HCT116 (cell line): ENCODE measurements at regions of chr5 and their contacts with region 1.

Region 1: GRCh38 chr5:44774279-44774880 is 34.4 kb upstream of the MRPS30 start:
- DNase-seq: peak; percentile 38
- ATAC-seq: no peak; the same call in 1 of the 2 replicates
- H3K4me3 ChIP-seq: no peak overlapping the region
- H3K27ac ChIP-seq: no peak overlapping the region
- H3K4me1 ChIP-seq: no peaks in the 10 kb centered on the region
- H3K27me3 ChIP-seq: no peaks in the 10 kb centered on the region
- CTCF ChIP-seq: peak; percentile 35 to 66 (median 59)
- POLR2A ChIP-seq: no peak
- RAD21 ChIP-seq: peak; percentile 81

Region 2: DNA sequence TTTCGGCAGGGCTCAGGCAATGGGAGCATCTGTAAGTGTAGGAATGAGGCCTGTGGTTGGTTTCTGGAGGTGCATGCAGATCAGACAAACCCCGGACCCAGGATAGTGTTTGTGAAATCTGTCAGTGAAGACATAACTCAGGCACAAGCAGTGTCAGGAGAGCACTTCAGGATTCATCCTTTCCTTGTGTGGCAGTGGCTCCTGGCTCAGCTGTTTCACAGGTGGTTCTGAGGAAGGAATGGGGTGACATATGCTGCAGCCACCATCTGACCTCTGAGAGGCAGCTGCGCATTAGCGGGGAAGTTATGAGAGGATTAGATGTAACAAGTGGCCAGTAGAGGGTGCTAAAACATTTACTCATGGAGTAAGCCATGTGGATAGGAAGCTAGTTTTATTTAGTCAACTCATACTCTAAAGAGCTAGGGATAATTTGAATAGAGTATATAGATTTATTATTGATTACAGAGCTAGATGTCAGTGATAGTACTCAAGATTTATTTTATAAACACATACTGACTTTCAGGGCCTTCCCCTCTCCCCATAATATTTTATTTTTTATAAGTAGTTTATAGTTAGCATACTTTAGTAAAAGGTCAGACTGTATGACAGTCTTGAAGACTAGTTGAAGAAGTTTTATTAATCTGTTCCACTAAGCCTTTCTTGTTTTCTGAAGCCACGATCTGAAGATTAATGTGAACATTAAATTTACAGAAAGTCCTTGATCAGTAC is 1143.0 kb before region 1 on chr5:
- CTCF ChIA-PET with region 1: interaction called, 18 read pairs
- POLR2A ChIA-PET with region 1: no interaction called
- RAD21 ChIA-PET with region 1: interaction called in 1 of 2 experiments, 4 read pairs
- intact Hi-C with region 1: loop called (anchors 5 kb)
- DNase-seq: peak; percentile 69
- ATAC-seq: peak; percentile 94
- H3K4me3 ChIP-seq: no peak overlapping the region
- H3K27ac ChIP-seq: no peak overlapping the region
- H3K4me1 ChIP-seq: peaks cover 0 to 2% of the 10 kb centered on the region in 2 experiments; a peak in 1 of 4 replicates
- H3K27me3 ChIP-seq: no peaks in the 10 kb centered on the region
- CTCF ChIP-seq: peak; percentile 56 to 83 (median 64); a peak in 5 of 6 replicates
- POLR2A ChIP-seq: no peak
- RAD21 ChIP-seq: peak; percentile 72

Region 3: DNA sequence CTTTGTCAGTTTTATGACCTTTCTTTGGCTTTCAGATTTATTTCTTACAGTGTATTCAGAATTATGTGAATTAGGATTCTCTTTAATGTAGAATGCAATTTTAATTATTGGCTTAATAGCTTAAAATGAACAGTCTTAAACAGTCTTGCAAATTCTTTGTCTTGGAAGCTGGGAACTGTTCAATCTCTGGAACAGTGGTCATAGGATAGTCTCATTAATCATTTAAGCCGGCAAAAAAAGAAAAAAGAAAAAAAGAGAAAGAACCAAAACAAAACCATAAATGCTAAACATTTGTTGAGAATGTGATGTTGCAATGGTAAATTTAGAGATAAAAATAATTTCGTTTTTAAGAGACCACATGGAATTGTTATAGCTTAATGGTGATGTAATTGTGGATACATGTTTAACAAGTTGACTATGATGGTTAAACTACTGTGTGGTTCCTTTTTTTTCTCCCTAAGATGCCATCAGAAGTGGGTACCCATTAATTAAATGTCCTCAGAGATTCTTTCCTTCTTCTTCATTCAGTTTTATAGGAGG is 1109.8 kb before region 1 on chr5:
- CTCF ChIA-PET with region 1: no interaction called
- POLR2A ChIA-PET with region 1: no interaction called
- RAD21 ChIA-PET with region 1: no interaction called
- intact Hi-C with region 1: loop called (anchors 2 kb)
- DNase-seq: no peak
- ATAC-seq: no peak
- H3K4me3 ChIP-seq: no peak overlapping the region
- H3K27ac ChIP-seq: no peak overlapping the region
- H3K4me1 ChIP-seq: no peaks in the 10 kb centered on the region
- H3K27me3 ChIP-seq: no peaks in the 10 kb centered on the region
- CTCF ChIP-seq: no peak
- POLR2A ChIP-seq: no peak
- RAD21 ChIP-seq: no peak

Region 4: DNA sequence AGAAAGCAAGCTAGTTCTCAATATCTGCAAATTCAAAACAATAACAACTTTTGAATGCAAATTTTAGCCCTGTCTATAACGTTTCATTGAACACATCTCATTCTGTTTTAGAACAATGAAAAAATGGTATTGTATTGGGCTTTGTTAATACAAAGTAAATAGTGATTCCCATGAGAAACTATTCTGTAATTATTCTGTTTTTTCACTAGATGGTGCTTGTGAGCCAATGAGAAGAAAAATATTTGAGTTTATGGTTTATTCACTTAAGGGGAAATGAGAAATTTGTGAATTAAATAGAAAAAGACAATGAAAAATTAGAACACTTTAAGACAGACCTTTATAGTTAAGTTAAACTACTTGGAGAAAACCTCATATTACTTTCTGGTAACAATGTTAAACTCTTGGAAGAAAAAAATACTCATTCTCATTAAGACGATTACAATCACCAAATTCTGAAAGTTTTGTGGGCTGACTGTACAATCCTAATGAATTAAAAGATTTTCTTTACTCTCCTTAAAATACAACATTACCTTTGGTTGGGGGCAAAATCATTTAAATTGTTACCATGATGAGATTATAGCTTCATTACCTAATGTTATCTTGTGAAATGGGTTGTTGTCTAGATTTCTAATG is 1044.4 kb before region 1 on chr5:
- CTCF ChIA-PET with region 1: interaction called, 4 read pairs
- POLR2A ChIA-PET with region 1: no interaction called
- RAD21 ChIA-PET with region 1: no interaction called
- intact Hi-C with region 1: loop called (anchors 1 kb)
- DNase-seq: peak; percentile 7
- ATAC-seq: 0 out of 2 replicates have a peak, but pooled peaks have one; percentile 40
- H3K4me3 ChIP-seq: no peak overlapping the region
- H3K27ac ChIP-seq: no peak overlapping the region
- H3K4me1 ChIP-seq: no peaks in the 10 kb centered on the region
- H3K27me3 ChIP-seq: no peaks in the 10 kb centered on the region; the same call in 1 of the 2 replicates
- CTCF ChIP-seq: peak in 2 of 3 experiments; percentile 29 to 66; a peak in 3 of 6 replicates
- POLR2A ChIP-seq: no peak
- RAD21 ChIP-seq: peak; percentile 62

Region 5: GRCh38 chr5:44332285-44332971 is 442.0 kb before region 1 on chr5:
- CTCF ChIA-PET with region 1: interaction called, 10 read pairs
- POLR2A ChIA-PET with region 1: no interaction called
- RAD21 ChIA-PET with region 1: no interaction called
- intact Hi-C with region 1: loop called (anchors 10 kb)
- DNase-seq: peak; percentile 39
- ATAC-seq: peak; percentile 74
- H3K4me3 ChIP-seq: no peak overlapping the region
- H3K27ac ChIP-seq: no peak overlapping the region
- H3K4me1 ChIP-seq: no peaks in the 10 kb centered on the region
- H3K27me3 ChIP-seq: no peaks in the 10 kb centered on the region
- CTCF ChIP-seq: peak; percentile 27 to 75 (median 60); a peak in 5 of 6 replicates
- POLR2A ChIP-seq: no peak
- RAD21 ChIP-seq: peak; percentile 55; the same call in 1 of the 2 replicates

Region 6: DNA sequence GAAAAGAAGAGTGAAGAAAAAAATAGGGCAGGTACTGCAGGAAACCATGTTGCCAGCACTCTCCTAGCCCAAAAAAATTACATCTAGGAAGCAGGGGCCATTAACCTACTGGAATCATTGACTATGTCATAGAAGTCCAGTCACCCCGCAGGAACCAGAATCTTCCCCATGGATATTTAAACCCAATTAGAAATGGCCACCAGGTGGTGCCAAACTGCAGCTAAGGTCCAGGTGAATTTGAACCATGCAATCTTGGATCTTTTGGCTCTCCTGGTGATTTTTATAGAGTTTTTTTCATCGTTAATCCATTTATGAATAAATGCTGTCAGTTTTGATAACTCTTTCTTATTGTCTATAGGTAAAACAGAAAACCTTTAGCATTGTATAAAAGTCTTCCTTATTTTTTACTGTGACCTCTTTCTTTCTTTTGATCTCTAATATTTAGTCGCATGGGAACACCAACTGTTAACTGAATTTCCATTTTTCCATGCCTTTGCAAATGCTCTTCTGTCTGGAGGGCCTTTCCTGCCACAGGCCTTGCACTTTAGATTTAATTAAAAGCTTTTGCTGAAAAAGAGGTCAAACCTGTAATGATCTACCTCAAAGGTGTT is 237.6 kb before region 1 on chr5:
- CTCF ChIA-PET with region 1: interaction called, 10 read pairs
- POLR2A ChIA-PET with region 1: no interaction called
- RAD21 ChIA-PET with region 1: no interaction called
- intact Hi-C with region 1: loop called (anchors 1 kb)
- DNase-seq: peak; percentile 53
- ATAC-seq: peak; percentile 69
- H3K4me3 ChIP-seq: no peak overlapping the region
- H3K27ac ChIP-seq: no peak overlapping the region
- H3K4me1 ChIP-seq: no peaks in the 10 kb centered on the region
- H3K27me3 ChIP-seq: no peaks in the 10 kb centered on the region
- CTCF ChIP-seq: peak; percentile 59 to 83 (median 64); a peak in 5 of 6 replicates
- POLR2A ChIP-seq: no peak
- RAD21 ChIP-seq: peak; percentile 78

Region 7: GRCh38 chr5:44919560-44919959 is 145.2 kb after region 1 on chr5:
- CTCF ChIA-PET with region 1: no interaction called
- POLR2A ChIA-PET with region 1: no interaction called
- RAD21 ChIA-PET with region 1: no interaction called
- intact Hi-C with region 1: no loop called
- DNase-seq: no peak
- ATAC-seq: no peak
- H3K4me3 ChIP-seq: no peak overlapping the region
- H3K27ac ChIP-seq: no peak overlapping the region
- H3K4me1 ChIP-seq: peaks cover 4 to 5% of the 10 kb centered on the region in 2 experiments; a peak in 1 of 4 replicates
- H3K27me3 ChIP-seq: no peaks in the 10 kb centered on the region
- CTCF ChIP-seq: no peak
- POLR2A ChIP-seq: no peak
- RAD21 ChIP-seq: no peak